Heart right ventricle (tissue), 16 donors: ENCODE measurements at regions of chr4 and their contacts with region 1.

Region 1: GRCh38 chr4:53089936-53090729 is 228.0 kb downstream of the RASL11B start:
- DNase-seq: no peak
- ATAC-seq: peak in 6 of 8 donors; percentile 29 to 51 (median 44)
- H3K4me3 ChIP-seq: no peak overlapping the region
- H3K27ac ChIP-seq: peak overlapping the region in 1 of 10 donors; percentile 11
- H3K4me1 ChIP-seq: peaks cover 0 to 30% (median 8%) of the 10 kb centered on the region in 9 donors
- H3K27me3 ChIP-seq: no peaks in the 10 kb centered on the region
- CTCF ChIP-seq: no peak

Region 2: GRCh38 chr4:53161051-53161786 is 71.1 kb after region 1 on chr4:
- intact Hi-C with region 1: loop called in 1 of 10 experiments (anchors 10 kb)
- DNase-seq: no peak
- ATAC-seq: peak in 1 of 8 donors; percentile 55
- H3K4me3 ChIP-seq: no peak overlapping the region
- H3K27ac ChIP-seq: peak overlapping the region in 5 of 10 donors; percentile 9 to 42 (median 22)
- H3K4me1 ChIP-seq: peaks cover 0 to 12% (median 9%) of the 10 kb centered on the region in 9 donors
- H3K27me3 ChIP-seq: no peaks in the 10 kb centered on the region
- CTCF ChIP-seq: no peak